HepG2 (cell line): ENCODE measurements at regions of chr22 and their contacts with region 1.

Region 1: DNA sequence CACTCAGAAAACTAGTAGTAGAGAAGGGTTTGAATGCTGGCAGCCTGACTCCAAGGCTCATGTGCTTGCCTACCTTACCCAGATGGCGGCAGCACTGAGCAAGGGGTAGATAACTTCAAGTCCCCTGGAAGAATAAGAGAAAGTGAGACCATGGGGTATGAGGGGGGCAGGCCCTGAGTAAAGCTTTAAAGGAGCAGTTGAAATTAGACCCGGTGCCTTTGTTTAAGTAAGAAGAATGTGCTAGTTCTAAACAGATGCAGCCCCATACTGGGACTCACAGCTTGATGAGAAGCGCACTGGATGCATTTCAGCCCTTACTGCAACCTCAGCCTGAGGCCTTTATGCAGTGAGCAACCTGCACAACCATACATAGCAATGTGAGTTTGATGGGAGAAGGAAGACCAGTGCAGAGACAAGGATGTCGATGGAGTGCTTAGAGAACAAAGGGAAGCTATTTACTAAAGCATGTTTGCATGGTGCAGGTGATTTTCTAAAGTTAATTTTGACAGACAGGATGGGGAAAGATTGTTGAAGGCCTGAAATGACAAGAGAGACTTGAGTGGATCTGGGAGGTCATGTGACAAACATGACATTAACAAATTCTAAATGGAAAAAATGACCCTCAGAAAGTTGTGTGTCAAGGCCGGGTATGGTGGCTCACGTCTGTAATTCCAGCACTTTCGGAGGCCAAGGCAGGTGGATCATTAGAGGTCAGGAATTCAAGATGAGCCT is 27.1 kb upstream of the TMA7B start:
- DNase-seq: peak; percentile 29
- ATAC-seq: no peak
- H3K4me3 ChIP-seq: no peak overlapping the region
- H3K27ac ChIP-seq: no peak overlapping the region
- H3K4me1 ChIP-seq: no peaks in the 10 kb centered on the region
- H3K27me3 ChIP-seq: peaks cover 0 to 24% of the 10 kb centered on the region in 2 experiments; a peak in 3 of 5 replicates
- CTCF ChIP-seq: peak; percentile 52
- EP300 ChIP-seq: no peak
- POLR2A ChIP-seq: no peak
- RAD21 ChIP-seq: no peak; the same call in 1 of the 2 replicates

Region 2: GRCh38 chr22:39917776-39918495 is 15.1 kb before region 1 on chr22:
- CTCF ChIA-PET with region 1: no interaction called
- POLR2A ChIA-PET with region 1: no interaction called
- in situ Hi-C with region 1: no loop called
- intact Hi-C with region 1: no loop called
- DNase-seq: no peak
- ATAC-seq: no peak
- H3K4me3 ChIP-seq: no peak overlapping the region
- H3K27ac ChIP-seq: no peak overlapping the region
- H3K4me1 ChIP-seq: no peaks in the 10 kb centered on the region
- H3K27me3 ChIP-seq: peaks cover 0 to 13% of the 10 kb centered on the region in 2 experiments; a peak in 1 of 5 replicates
- CTCF ChIP-seq: no peak
- EP300 ChIP-seq: no peak
- POLR2A ChIP-seq: no peak
- RAD21 ChIP-seq: no peak

Region 3: GRCh38 chr22:39985383-39986035 is 52.4 kb after region 1 on chr22:
- CTCF ChIA-PET with region 1: no interaction called
- POLR2A ChIA-PET with region 1: no interaction called
- in situ Hi-C with region 1: no loop called
- intact Hi-C with region 1: no loop called
- DNase-seq: no peak
- ATAC-seq: no peak
- H3K4me3 ChIP-seq: no peak overlapping the region
- H3K27ac ChIP-seq: no peak overlapping the region
- H3K4me1 ChIP-seq: peaks cover 8% of the 10 kb centered on the region
- H3K27me3 ChIP-seq: peaks cover 2 to 19% of the 10 kb centered on the region in 2 experiments; a peak in 2 of 5 replicates
- CTCF ChIP-seq: no peak
- EP300 ChIP-seq: no peak
- POLR2A ChIP-seq: no peak
- RAD21 ChIP-seq: no peak

Region 4: GRCh38 chr22:40024201-40025061 is 91.3 kb after region 1 on chr22:
- CTCF ChIA-PET with region 1: interaction called, 5 read pairs
- POLR2A ChIA-PET with region 1: no interaction called
- in situ Hi-C with region 1: no loop called
- intact Hi-C with region 1: loop called (anchors 2 kb)
- DNase-seq: peak; percentile 54
- ATAC-seq: peak; percentile 72
- H3K4me3 ChIP-seq: no peak overlapping the region
- H3K27ac ChIP-seq: no peak overlapping the region
- H3K4me1 ChIP-seq: peaks cover 15% of the 10 kb centered on the region
- H3K27me3 ChIP-seq: peaks cover 4 to 66% of the 10 kb centered on the region in 2 experiments; a peak in 4 of 5 replicates
- CTCF ChIP-seq: peak; percentile 94
- EP300 ChIP-seq: no peak
- POLR2A ChIP-seq: no peak
- RAD21 ChIP-seq: peak; percentile 88

Region 5: GRCh38 chr22:40323681-40324171 is 390.6 kb after region 1 on chr22:
- CTCF ChIA-PET with region 1: no interaction called
- POLR2A ChIA-PET with region 1: no interaction called
- in situ Hi-C with region 1: no loop called
- intact Hi-C with region 1: no loop called
- DNase-seq: no peak
- ATAC-seq: no peak
- H3K4me3 ChIP-seq: no peak overlapping the region
- H3K27ac ChIP-seq: no peak overlapping the region
- H3K4me1 ChIP-seq: no peaks in the 10 kb centered on the region
- H3K27me3 ChIP-seq: no peaks in the 10 kb centered on the region
- CTCF ChIP-seq: no peak
- EP300 ChIP-seq: no peak
- POLR2A ChIP-seq: no peak
- RAD21 ChIP-seq: no peak